ENCODE measurements at regions of chr22 and their contacts with region 1.

Region 1: GRCh38 chr22:36856121-36856791 is 4.5 kb upstream of the NCF4 start:
- DNase-seq: peak; percentile 94
- H3K4me3 Mint-ChIP-seq: peak overlapping the region; percentile 44
- H3K27ac Mint-ChIP-seq: peak overlapping the region; percentile 55
- H3K4me1 Mint-ChIP-seq: peaks cover 62% of the 10 kb centered on the region
- H3K27me3 Mint-ChIP-seq: no peaks in the 10 kb centered on the region

Region 2: DNA sequence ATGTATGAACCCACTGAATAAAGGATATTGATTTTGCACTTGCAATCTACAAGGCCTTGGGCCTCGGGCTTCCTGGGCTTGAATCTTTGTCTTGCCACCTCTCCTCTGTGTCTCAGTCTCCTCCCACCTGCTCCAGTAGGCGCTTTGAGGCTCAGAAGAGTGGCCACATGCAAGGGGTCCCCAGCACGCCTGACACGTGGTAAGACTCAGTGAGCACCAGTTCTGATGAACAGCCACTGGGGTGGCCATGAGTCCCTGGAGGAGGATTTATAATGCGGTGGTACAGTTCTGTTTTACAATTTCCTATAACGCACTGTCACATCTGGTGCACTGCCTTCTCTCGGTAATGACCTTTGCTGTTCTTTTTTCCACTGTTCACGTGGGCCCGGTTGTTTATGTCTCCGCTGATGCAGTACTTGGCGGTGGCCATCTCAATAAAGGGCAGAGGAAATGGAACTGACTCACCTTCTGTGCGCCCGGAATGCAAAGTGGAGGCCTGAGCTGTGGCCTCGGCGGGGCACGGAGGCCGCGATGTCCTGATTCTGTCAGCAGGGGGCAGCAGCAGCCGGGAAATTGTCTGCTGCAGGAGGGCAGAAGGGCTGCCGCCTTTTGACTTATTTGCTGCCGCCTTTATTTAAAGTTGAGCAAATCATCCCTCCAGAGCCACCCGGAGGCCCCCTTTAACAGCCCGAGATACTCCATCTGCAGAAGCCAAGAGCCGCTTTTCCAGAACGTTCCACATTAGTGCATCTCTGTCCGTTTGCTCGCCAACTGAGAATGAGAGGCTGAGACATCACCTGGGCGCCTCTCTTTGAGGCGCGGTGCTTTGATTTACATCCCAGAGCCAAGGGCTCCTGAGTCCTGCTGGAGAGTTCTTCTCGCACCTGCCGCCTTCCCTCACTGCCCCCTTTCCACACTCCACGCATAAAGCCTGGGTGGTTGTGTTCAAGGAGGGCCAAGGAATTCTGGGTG is 74.3 kb before region 1 on chr22:
- CTCF ChIA-PET with region 1: interaction called, 48 read pairs
- POLR2A ChIA-PET with region 1: interaction called, 16 read pairs
- DNase-seq: peak; percentile 93
- H3K4me3 Mint-ChIP-seq: peak overlapping the region; percentile 4
- H3K27ac Mint-ChIP-seq: peak overlapping the region; percentile 71
- H3K4me1 Mint-ChIP-seq: peaks cover 32% of the 10 kb centered on the region
- H3K27me3 Mint-ChIP-seq: peaks cover 9% of the 10 kb centered on the region

Region 3: DNA sequence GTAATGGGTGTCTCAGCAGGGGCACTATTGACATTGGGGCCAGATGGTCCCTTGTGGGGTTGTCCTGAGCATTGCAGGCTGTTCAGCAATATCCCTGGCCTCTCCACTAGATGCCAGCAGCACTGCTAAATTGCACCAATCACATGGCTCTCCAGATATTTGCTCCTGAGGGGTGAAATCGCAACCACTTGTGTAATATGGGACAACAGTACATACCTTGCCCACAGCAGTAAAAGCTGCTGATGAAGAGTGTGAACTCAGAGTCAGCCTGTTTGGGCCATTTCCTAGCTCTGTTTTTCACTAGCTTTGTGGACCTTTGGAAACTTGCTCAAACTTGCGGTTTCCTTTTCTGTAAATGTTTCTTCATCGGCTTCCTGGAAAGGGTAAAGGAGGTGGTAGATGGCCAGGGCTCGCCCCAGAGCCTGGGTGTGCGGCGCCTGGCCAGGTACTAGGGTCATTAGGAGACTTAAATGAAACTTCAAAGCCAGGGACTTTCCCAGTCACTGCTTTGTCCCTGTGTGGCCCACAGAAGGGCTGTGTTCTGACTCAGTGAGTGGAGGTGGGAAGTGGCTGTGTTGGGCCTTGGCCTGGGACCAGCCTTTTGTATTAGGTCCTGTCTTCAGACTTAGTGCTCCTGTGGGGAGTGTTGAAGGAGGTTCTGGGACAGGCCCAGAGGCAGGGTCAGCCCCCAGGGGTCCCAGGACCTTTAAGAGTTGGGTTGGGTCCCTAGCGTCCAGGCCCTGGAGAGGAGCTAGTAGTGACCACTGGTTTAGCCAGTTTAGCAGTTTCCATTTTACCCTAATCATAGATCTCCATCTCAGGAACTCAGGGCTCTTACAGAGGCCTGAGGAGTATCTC is 17.7 kb after region 1 on chr22:
- CTCF ChIA-PET with region 1: interaction called, 28 read pairs
- POLR2A ChIA-PET with region 1: interaction called, 29 read pairs
- DNase-seq: peak; percentile 61
- H3K4me3 Mint-ChIP-seq: peak overlapping the region; percentile 14
- H3K27ac Mint-ChIP-seq: peak overlapping the region; percentile 90
- H3K4me1 Mint-ChIP-seq: peaks cover 37% of the 10 kb centered on the region
- H3K27me3 Mint-ChIP-seq: no peaks in the 10 kb centered on the region

Region 4: DNA sequence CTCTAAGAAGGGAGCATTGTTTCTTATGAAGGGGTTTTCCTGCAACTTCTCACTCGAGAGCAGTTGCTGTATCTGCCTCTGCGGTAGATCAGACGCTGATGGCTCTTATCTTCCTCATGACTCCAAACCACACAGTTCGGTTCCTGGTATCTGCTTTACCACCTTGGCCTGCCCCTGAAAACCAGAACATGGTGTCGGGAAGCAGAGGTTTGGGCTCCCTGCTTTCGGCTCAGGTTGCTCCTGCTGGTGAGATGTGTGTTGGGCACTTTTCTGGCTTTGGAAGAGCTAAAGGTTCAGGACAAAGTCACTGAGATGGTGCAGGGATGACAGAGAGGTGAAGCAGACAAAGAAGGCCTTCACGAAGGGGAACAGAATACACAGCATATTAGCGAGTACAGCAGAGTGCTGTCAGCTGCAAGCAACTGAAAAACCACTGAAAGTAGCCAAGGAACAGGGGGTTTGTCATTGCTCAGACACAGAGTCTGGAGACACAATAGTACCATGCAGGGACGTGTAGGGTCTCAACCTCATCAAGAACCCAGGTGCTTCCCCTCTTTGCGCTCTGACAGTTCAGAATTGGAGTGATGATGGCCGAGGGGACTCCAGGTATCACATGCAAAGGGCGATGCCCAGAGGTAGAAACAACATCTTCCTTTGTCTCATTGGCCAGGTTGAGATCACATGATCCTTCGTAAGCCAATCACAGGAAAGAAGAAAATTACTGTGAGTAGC is 45.3 kb after region 1 on chr22:
- CTCF ChIA-PET with region 1: interaction called, 14 read pairs
- POLR2A ChIA-PET with region 1: interaction called, 19 read pairs
- DNase-seq: peak; percentile 47
- H3K4me3 Mint-ChIP-seq: peak overlapping the region; percentile 59
- H3K27ac Mint-ChIP-seq: peak overlapping the region; percentile 89
- H3K4me1 Mint-ChIP-seq: peaks cover 43% of the 10 kb centered on the region
- H3K27me3 Mint-ChIP-seq: peaks cover 14% of the 10 kb centered on the region